Uterus (tissue), 4 donors: ENCODE measurements at regions of chr9 and their contacts with region 1.

Region 1: GRCh38 chr9:37913480-37914153 is 9.7 kb upstream of the SLC25A51 start:
- DNase-seq: peak; percentile 68 to 80
- H3K4me3 ChIP-seq: no peak overlapping the region
- H3K27ac ChIP-seq: no peak overlapping the region
- H3K4me1 ChIP-seq: no peaks in the 10 kb centered on the region
- H3K27me3 ChIP-seq: no peaks in the 10 kb centered on the region
- CTCF ChIP-seq: peak; percentile 94 to 98 (median 96)
- POLR2A ChIP-seq: peak in 1 of 2 donors; percentile 21

Region 2: GRCh38 chr9:38068866-38069629 is 155.4 kb after region 1 on chr9 and contains the start of gene SHB:
- intact Hi-C with region 1: loop called (anchors 10 kb)
- DNase-seq: peak; percentile 65 to 71
- H3K4me3 ChIP-seq: peak within 1 kb of the TSS; percentile 54 to 63
- H3K27ac ChIP-seq: peak within 1 kb of the TSS; percentile 80 to 86
- H3K4me1 ChIP-seq: peaks cover 0 to 8% of the 10 kb centered on the region in 2 donors
- H3K27me3 ChIP-seq: no peaks in the 10 kb centered on the region
- CTCF ChIP-seq: peak in 2 of 4 experiments; percentile 1 to 35
- POLR2A ChIP-seq: peak; percentile 72 to 82
- total RNA-seq, gene SHB: 3.5 to 19.6 (median 7.3) TPM

Region 3: DNA sequence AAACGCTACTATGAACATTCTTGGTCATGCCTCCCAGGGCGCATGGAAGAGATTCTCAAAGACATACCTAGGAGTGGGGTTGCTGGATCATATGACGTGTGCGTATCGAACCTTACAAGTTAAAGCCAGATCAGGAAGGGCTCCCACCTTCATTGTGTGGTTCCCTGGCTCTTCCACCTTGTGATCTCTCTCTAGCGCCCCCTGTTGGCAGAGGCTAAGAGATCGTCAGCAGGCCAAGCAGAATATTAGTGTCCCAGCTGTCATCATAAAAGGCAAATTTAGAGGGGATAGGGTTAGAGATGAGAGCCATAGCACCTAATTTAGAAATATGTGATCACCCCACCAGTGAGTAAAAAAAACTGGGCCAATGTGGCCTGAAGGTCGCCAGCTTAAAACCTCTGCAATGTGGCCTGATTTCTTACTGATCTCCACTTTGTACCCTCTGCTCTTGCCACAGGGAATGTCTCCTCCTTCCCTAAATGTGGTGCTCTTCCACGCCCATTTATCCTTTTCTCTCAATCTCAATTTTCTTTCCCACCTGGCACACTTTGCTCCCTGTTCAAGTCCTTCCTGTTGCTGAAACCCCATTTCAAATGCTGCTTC is 247.1 kb after region 1 on chr9:
- intact Hi-C with region 1: loop called (anchors 5 kb)
- DNase-seq: peak; percentile 30 to 43
- H3K4me3 ChIP-seq: no peak overlapping the region
- H3K27ac ChIP-seq: no peak overlapping the region
- H3K4me1 ChIP-seq: no peaks in the 10 kb centered on the region
- H3K27me3 ChIP-seq: no peaks in the 10 kb centered on the region
- CTCF ChIP-seq: peak; percentile 40 to 52 (median 47)
- POLR2A ChIP-seq: no peak

Region 4: DNA sequence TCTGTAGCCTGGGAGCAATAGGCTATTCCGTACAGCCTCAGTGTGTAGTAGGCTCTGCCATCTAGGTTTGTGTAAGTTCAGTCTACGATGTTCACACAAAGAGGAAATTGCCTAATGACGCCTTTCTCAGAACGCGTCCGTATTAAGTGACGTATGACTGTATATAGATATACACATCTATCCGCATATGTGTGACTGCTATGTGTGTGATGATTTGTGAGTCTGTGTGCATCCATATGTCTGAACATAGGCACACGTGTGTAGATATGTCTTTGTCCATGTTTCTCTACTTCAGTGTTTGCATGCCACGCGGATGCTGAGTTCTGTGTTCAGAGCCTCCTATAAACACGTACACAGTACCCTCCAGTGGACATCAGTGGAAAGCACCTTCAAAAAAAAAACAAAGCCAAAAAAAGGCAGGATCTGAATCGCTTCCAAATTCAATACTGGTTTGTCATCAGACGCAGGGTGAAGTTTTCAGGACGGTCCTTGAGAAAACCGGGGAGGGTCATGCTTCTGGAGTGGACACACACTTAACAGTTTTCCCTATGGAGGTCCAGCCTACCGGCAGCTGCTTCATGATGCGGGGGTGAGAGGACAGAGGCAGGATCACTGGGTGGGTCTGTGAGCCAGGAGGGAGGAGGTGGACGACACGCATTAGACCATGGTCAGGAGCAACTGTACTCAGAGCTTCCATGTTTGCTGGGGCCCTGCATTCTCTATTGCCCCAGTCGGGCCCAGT is 449.4 kb after region 1 on chr9:
- intact Hi-C with region 1: loop called (anchors 5 kb)
- DNase-seq: peak; percentile 28 to 48
- H3K4me3 ChIP-seq: no peak overlapping the region
- H3K27ac ChIP-seq: no peak overlapping the region
- H3K4me1 ChIP-seq: no peaks in the 10 kb centered on the region
- H3K27me3 ChIP-seq: no peaks in the 10 kb centered on the region
- CTCF ChIP-seq: peak; percentile 47 to 71 (median 64)
- POLR2A ChIP-seq: no peak